ENCODE measurements at regions of chr21 and their contacts with region 1.

Region 1: GRCh38 chr21:36156339-36156814 is 247 bp upstream of the DOP1B start:
- DNase-seq: peak; percentile 99 to 100 (median 100)
- ATAC-seq: peak; percentile 90
- H3K4me3 ChIP-seq: peak overlapping the region; percentile 85
- H3K4me3 Mint-ChIP-seq: peak overlapping the region; percentile 94
- H3K27ac ChIP-seq: peak overlapping the region; percentile 70 to 74
- H3K27ac Mint-ChIP-seq: peak overlapping the region; percentile 76
- H3K4me1 ChIP-seq: peaks cover 25% of the 10 kb centered on the region
- H3K4me1 Mint-ChIP-seq: peaks cover 44% of the 10 kb centered on the region
- H3K27me3 ChIP-seq: no peaks in the 10 kb centered on the region
- H3K27me3 Mint-ChIP-seq: no peaks in the 10 kb centered on the region
- CTCF ChIP-seq: no peak

Region 2: GRCh38 chr21:36141513-36141925 is 14.9 kb before region 1 on chr21:
- CTCF ChIA-PET with region 1: interaction called, 10 read pairs
- POLR2A ChIA-PET with region 1: interaction called, 6 read pairs
- intact Hi-C with region 1: loop called in 1 of 2 experiments (anchors 1 kb)
- DNase-seq: peak; percentile 68 to 96 (median 82)
- ATAC-seq: peak; percentile 89
- H3K4me3 ChIP-seq: no peak overlapping the region
- H3K4me3 Mint-ChIP-seq: peak overlapping the region; percentile 0
- H3K27ac ChIP-seq: peak overlapping the region; percentile 19 to 38
- H3K27ac Mint-ChIP-seq: peak overlapping the region; percentile 66
- H3K4me1 ChIP-seq: peaks cover 33% of the 10 kb centered on the region
- H3K4me1 Mint-ChIP-seq: peaks cover 24% of the 10 kb centered on the region
- H3K27me3 ChIP-seq: no peaks in the 10 kb centered on the region
- H3K27me3 Mint-ChIP-seq: no peaks in the 10 kb centered on the region
- CTCF ChIP-seq: peak; percentile 84

Region 3: DNA sequence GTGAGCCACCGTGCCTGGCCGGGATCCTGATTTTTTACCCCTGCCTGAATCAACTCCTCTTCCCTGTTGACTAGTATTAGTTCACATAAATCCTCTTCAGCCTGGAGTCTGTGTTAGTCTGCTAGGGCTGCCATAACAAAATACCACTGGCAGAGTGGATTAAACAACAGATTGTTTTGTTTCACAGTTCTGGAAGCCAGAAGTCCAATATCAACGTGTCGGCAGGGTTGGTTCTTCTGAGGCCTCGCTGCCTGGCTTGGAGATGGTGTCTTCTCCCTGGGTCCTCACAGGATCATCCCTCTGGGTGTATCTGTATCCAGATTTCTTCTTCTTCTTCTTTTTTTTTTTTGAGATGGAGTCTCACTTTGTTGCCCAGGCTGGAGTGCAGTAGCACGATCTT is 18.4 kb after region 1 on chr21:
- CTCF ChIA-PET with region 1: interaction called, 23 read pairs
- POLR2A ChIA-PET with region 1: interaction called, 11 read pairs
- intact Hi-C with region 1: loop called (anchors 1 to 2 kb)
- DNase-seq: no peak
- ATAC-seq: no peak
- H3K4me3 ChIP-seq: no peak overlapping the region
- H3K4me3 Mint-ChIP-seq: no peak overlapping the region
- H3K27ac ChIP-seq: no peak overlapping the region
- H3K27ac Mint-ChIP-seq: peak overlapping the region; percentile 91
- H3K4me1 ChIP-seq: peaks cover 28% of the 10 kb centered on the region
- H3K4me1 Mint-ChIP-seq: peaks cover 33% of the 10 kb centered on the region
- H3K27me3 ChIP-seq: no peaks in the 10 kb centered on the region
- H3K27me3 Mint-ChIP-seq: no peaks in the 10 kb centered on the region
- CTCF ChIP-seq: no peak

Region 4: DNA sequence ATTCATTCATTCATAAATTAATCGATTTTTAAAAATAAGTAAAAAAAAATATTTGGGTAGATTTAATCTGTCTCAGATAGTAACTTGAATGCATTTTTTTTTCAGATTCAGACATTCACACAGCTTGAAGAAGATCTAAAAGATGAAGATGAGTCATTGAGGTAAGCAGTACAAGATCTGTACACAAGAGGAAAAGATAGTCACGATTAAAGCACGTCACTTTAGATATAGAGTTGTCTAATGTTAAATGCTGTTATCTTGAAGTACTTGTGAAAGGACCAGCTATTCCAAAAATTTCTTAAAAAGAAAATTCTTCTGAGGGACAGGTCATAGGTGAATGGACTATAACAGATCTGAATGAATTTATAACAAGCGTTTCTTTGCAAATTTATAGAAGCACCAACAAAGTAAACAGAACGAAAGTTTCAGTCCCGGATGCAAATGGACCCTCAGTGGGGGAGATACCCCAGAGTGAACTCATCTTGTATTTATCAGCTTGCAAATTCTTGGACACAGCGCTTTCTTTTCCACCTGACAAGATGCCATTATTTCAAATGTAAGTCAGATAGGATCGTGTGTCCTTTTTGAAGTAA is 132.4 kb after region 1 on chr21:
- CTCF ChIA-PET with region 1: no interaction called
- POLR2A ChIA-PET with region 1: interaction called, 8 read pairs
- intact Hi-C with region 1: loop called in 1 of 2 experiments (anchors 2 kb)
- DNase-seq: peak in 3 of 14 experiments; percentile 66 to 77 (median 73)
- ATAC-seq: peak; percentile 79
- H3K4me3 ChIP-seq: peak overlapping the region; percentile 27
- H3K4me3 Mint-ChIP-seq: peak overlapping the region; percentile 78
- H3K27ac ChIP-seq: peak overlapping the region; percentile 76 to 86
- H3K27ac Mint-ChIP-seq: peak overlapping the region; percentile 96
- H3K4me1 ChIP-seq: peaks cover 20% of the 10 kb centered on the region
- H3K4me1 Mint-ChIP-seq: peaks cover 35% of the 10 kb centered on the region
- H3K27me3 ChIP-seq: no peaks in the 10 kb centered on the region
- H3K27me3 Mint-ChIP-seq: no peaks in the 10 kb centered on the region
- CTCF ChIP-seq: no peak

Region 5: DNA sequence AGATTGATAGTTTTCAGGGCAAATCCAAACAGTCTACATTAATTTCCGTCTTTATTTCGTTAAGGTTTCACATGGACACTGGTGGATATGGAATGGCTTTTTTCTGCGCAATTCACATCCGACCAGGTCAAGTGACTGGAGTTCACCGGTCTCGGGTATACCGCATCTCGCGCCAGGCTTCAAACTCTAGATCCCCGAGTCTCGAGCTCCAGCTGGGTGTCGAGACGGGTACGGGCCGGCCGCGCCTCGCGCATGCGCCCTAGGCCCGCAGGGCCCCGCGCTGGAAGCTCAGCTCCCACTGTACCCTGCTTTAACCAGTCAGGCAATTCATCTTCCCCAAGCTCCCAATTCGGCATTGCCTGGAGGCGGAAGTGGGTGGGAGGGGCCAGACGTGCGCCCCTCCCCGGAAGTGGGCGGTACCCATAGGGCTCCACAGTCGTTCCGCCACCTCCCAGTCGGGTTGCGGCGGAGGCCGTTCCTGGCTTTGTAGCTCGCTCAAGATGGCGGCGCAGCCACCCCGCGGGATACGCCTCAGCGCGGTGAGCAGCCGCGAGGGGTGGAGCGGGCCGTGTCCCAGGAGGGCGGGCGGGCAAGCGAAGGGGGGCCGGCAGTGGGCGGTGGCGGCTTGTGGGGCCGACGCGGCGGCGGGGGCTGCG is 163.5 kb after region 1 on chr21 and contains the start of gene MORC3:
- CTCF ChIA-PET with region 1: interaction called, 4 read pairs
- POLR2A ChIA-PET with region 1: interaction called, 21 read pairs
- intact Hi-C with region 1: loop called in 1 of 2 experiments (anchors 1 kb)
- DNase-seq: peak; percentile 96 to 99 (median 98)
- ATAC-seq: peak; percentile 87
- H3K4me3 ChIP-seq: peak within 1 kb of the TSS; percentile 88
- H3K4me3 Mint-ChIP-seq: peak within 1 kb of the TSS; percentile 90
- H3K27ac ChIP-seq: peak within 1 kb of the TSS; percentile 81 to 96
- H3K27ac Mint-ChIP-seq: peak within 1 kb of the TSS; percentile 98
- H3K4me1 ChIP-seq: peaks cover 22% of the 10 kb centered on the region
- H3K4me1 Mint-ChIP-seq: peaks cover 39% of the 10 kb centered on the region
- H3K27me3 ChIP-seq: no peaks in the 10 kb centered on the region
- H3K27me3 Mint-ChIP-seq: no peaks in the 10 kb centered on the region
- CTCF ChIP-seq: no peak
- total RNA-seq, gene MORC3: 70.2 to 71.0 TPM

Region 6: GRCh38 chr21:36385233-36386030 is 229.1 kb after region 1 on chr21 and contains the start of gene CHAF1B:
- CTCF ChIA-PET with region 1: no interaction called
- POLR2A ChIA-PET with region 1: no interaction called
- intact Hi-C with region 1: loop called in 1 of 2 experiments (anchors 5 kb)
- DNase-seq: peak; percentile 65 to 90 (median 78)
- ATAC-seq: peak; percentile 98
- H3K4me3 ChIP-seq: peak within 1 kb of the TSS; percentile 65
- H3K4me3 Mint-ChIP-seq: peak within 1 kb of the TSS; percentile 91
- H3K27ac ChIP-seq: no peak within 1 kb of the TSS
- H3K27ac Mint-ChIP-seq: peak within 1 kb of the TSS; percentile 10
- H3K4me1 ChIP-seq: peaks cover 13% of the 10 kb centered on the region
- H3K4me1 Mint-ChIP-seq: no peaks in the 10 kb centered on the region
- H3K27me3 ChIP-seq: no peaks in the 10 kb centered on the region
- H3K27me3 Mint-ChIP-seq: no peaks in the 10 kb centered on the region
- CTCF ChIP-seq: no peak
- total RNA-seq, gene CHAF1B: 4.5 to 4.8 TPM

Measured in CD4-positive, alpha-beta T cell (primary cell).